Activated naive CD4-positive, alpha-beta T cell treated with anti-CD3 and anti-CD28 coated beads for 36 hours (primary cell): ENCODE measurements at regions of chr1 and their contacts with region 1.

Region 1: GRCh38 chr1:100433563-100433962 is 81.3 kb downstream of the CDC14A start:
- DNase-seq: no peak
- H3K4me3 Mint-ChIP-seq: no peak overlapping the region
- H3K27ac Mint-ChIP-seq: no peak overlapping the region
- H3K4me1 Mint-ChIP-seq: peaks cover 61% of the 10 kb centered on the region
- H3K27me3 Mint-ChIP-seq: no peaks in the 10 kb centered on the region

Region 2: GRCh38 chr1:100152271-100152670 is 281.3 kb before region 1 on chr1:
- CTCF ChIA-PET with region 1: no interaction called
- intact Hi-C with region 1: no loop called
- DNase-seq: no peak
- H3K4me3 Mint-ChIP-seq: no peak overlapping the region
- H3K27ac Mint-ChIP-seq: no peak overlapping the region
- H3K4me1 Mint-ChIP-seq: peaks cover 6% of the 10 kb centered on the region
- H3K27me3 Mint-ChIP-seq: no peaks in the 10 kb centered on the region

Region 3: GRCh38 chr1:100449477-100449876 is 15.9 kb after region 1 on chr1:
- CTCF ChIA-PET with region 1: interaction called, 15 read pairs
- intact Hi-C with region 1: loop called (anchors 1 kb)
- DNase-seq: peak; percentile 61
- H3K4me3 Mint-ChIP-seq: peak overlapping the region; percentile 9
- H3K27ac Mint-ChIP-seq: peak overlapping the region; percentile 79
- H3K4me1 Mint-ChIP-seq: peaks cover 87% of the 10 kb centered on the region
- H3K27me3 Mint-ChIP-seq: no peaks in the 10 kb centered on the region